Calu3 (cell line): ENCODE measurements at regions of chr3 and their contacts with region 1.

Region 1: GRCh38 chr3:193465992-193466608 is 87.5 kb upstream of the ATP13A5 start:
- DNase-seq: no peak
- H3K4me3 Mint-ChIP-seq: no peak overlapping the region
- H3K27ac Mint-ChIP-seq: no peak overlapping the region
- H3K4me1 Mint-ChIP-seq: peaks cover 9% of the 10 kb centered on the region
- H3K27me3 Mint-ChIP-seq: no peaks in the 10 kb centered on the region
- CTCF ChIP-seq: no peak

Region 2: DNA sequence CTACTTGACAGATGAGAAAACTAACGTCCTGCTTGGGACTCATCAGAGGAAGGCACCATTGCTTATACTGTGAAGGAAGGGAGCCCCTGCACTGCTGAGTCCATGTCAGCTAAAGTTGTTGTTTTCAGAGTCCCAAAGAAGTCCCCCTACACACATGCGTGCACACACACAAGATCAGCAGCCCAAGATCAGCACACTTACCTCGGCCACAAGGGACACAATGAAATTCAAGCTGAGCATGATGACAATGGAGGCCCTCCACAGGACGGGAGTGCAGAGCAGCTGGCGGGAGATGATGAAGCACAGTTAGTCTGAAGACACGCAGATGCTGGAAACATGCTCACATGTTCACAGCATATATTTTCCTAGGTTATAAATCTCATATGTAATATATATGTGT is 59.0 kb before region 1 on chr3:
- CTCF ChIA-PET with region 1: no interaction called
- intact Hi-C with region 1: no loop called
- DNase-seq: no peak
- H3K4me3 Mint-ChIP-seq: no peak overlapping the region
- H3K27ac Mint-ChIP-seq: no peak overlapping the region
- H3K4me1 Mint-ChIP-seq: no peaks in the 10 kb centered on the region
- H3K27me3 Mint-ChIP-seq: no peaks in the 10 kb centered on the region
- CTCF ChIP-seq: no peak

Region 3: DNA sequence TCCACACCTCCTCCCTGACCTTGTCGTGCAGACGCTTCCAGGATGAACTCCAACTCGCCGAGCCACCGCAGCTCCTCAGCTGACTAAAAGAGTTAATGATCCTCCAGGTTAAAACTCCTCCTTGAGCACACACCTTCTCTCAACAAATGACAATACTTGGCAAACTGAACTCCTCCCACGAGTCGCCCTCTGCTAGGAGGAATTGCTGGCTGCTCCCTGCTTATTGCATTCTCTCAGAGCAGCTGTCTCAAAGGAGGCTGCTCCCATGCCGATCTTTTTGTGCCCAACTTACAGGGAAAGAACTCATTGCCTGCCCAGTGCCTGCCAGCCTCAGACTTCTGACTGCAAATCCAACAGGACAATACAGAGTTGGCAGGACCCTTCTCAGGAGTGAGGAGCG is 88.7 kb after region 1 on chr3 and contains the start of gene ATP13A4:
- CTCF ChIA-PET with region 1: interaction called, 3 read pairs
- intact Hi-C with region 1: loop called (anchors 2 kb)
- DNase-seq: peak; percentile 84
- H3K4me3 Mint-ChIP-seq: peak within 1 kb of the TSS; percentile 81
- H3K27ac Mint-ChIP-seq: peak within 1 kb of the TSS; percentile 91
- H3K4me1 Mint-ChIP-seq: peaks cover 72% of the 10 kb centered on the region
- H3K27me3 Mint-ChIP-seq: no peaks in the 10 kb centered on the region
- CTCF ChIP-seq: no peak
- total RNA-seq, gene ATP13A4: 24.6 and 31.9 TPM in 2 replicates

Region 4: DNA sequence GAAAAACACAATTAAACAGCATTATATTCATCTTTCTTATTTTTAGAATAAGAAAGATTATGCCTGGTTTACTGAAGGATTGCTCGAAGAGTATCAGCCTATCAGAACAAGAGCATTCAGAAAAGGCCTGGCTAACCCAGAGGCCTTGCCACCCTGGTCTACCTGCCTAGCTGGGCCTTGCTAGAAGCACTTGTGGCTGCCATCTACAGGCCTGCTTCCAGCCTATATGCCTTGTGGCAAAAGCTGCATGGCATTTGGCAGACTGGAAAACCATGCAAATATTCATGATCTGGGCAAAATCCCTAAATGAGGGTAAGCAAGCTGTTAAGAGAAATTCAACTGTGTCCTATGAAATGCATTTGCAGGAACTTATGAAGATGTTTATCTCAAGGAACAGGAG is 97.9 kb after region 1 on chr3:
- CTCF ChIA-PET with region 1: interaction called, 11 read pairs
- intact Hi-C with region 1: loop called (anchors 1 kb)
- DNase-seq: peak; percentile 84
- H3K4me3 Mint-ChIP-seq: no peak overlapping the region
- H3K27ac Mint-ChIP-seq: no peak overlapping the region
- H3K4me1 Mint-ChIP-seq: peaks cover 6% of the 10 kb centered on the region
- H3K27me3 Mint-ChIP-seq: no peaks in the 10 kb centered on the region
- CTCF ChIP-seq: peak; percentile 57

Region 5: GRCh38 chr3:193572426-193572908 is 106.4 kb after region 1 on chr3:
- CTCF ChIA-PET with region 1: interaction called, 7 read pairs
- intact Hi-C with region 1: loop called (anchors 1 kb)
- DNase-seq: peak; percentile 83
- H3K4me3 Mint-ChIP-seq: no peak overlapping the region
- H3K27ac Mint-ChIP-seq: no peak overlapping the region
- H3K4me1 Mint-ChIP-seq: peaks cover 13% of the 10 kb centered on the region
- H3K27me3 Mint-ChIP-seq: no peaks in the 10 kb centered on the region
- CTCF ChIP-seq: peak; percentile 82

Region 6: GRCh38 chr3:193585530-193585929 is 119.4 kb after region 1 on chr3:
- CTCF ChIA-PET with region 1: no interaction called
- intact Hi-C with region 1: no loop called
- DNase-seq: no peak
- H3K4me3 Mint-ChIP-seq: no peak overlapping the region
- H3K27ac Mint-ChIP-seq: no peak overlapping the region
- H3K4me1 Mint-ChIP-seq: peaks cover 11% of the 10 kb centered on the region
- H3K27me3 Mint-ChIP-seq: no peaks in the 10 kb centered on the region
- CTCF ChIP-seq: no peak